GM10248 (cell line): ENCODE measurements at regions of chr1 and their contacts with region 1.

Region 1: GRCh38 chr1:228471762-228472398 is 15.3 kb upstream of the RNF187 start:
- DNase-seq: peak; percentile 61
- CTCF ChIP-seq: peak; percentile 62

Region 2: DNA sequence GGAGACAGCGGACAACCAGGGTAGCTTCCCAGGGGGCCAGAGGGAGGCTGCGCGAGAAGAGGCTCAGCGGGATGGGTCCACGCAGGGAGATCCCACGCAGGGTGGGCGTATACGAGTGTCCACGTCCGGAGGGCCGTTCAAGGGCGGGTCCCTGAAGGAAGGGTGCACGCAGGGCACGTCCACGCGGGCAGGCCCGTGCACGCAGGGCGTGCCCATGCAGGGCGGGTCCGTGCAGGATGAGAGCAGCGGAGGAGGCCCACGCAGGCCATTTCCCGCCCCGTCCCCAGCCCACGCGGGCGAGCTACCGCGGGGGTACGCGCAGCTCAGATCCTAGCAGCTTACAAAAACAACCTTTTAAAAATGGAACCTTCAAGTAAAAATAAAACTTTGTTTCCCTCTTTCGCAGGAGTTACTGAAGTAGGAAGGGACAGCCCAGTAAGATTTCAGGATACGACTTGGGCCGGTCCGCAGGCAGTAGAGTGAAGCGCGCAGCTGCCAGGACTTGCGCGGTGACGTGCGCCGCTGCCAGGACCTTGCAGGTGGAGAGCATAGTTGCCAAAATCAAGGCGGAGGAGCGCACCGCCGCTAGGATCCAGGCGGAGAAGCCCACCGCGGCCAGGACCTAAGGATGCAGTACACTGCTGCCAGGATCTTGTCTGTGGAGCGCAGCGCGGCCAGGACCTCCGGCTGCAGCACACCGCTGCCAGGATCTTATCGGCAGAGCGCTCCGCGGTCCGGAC is 14.9 kb after region 1 on chr1:
- CTCF ChIA-PET with region 1: interaction called, 10 read pairs
- POLR2A ChIA-PET with region 1: no interaction called
- DNase-seq: peak; percentile 81
- CTCF ChIP-seq: no peak